IMR-90 (cell line): ENCODE measurements at regions of chr4 and their contacts with region 1.

Region 1: GRCh38 chr4:85798012-85798770 is 323.2 kb downstream of the ARHGAP24 start:
- DNase-seq: no peak
- ATAC-seq: no peak
- H3K4me3 ChIP-seq: no peak overlapping the region
- H3K27ac ChIP-seq: no peak overlapping the region
- H3K4me1 ChIP-seq: peaks cover 2% of the 10 kb centered on the region; the same call in 1 of the 2 replicates
- H3K27me3 ChIP-seq: no peaks in the 10 kb centered on the region
- CTCF ChIP-seq: no peak
- POLR2A ChIP-seq: no peak
- RAD21 ChIP-seq: no peak

Region 2: DNA sequence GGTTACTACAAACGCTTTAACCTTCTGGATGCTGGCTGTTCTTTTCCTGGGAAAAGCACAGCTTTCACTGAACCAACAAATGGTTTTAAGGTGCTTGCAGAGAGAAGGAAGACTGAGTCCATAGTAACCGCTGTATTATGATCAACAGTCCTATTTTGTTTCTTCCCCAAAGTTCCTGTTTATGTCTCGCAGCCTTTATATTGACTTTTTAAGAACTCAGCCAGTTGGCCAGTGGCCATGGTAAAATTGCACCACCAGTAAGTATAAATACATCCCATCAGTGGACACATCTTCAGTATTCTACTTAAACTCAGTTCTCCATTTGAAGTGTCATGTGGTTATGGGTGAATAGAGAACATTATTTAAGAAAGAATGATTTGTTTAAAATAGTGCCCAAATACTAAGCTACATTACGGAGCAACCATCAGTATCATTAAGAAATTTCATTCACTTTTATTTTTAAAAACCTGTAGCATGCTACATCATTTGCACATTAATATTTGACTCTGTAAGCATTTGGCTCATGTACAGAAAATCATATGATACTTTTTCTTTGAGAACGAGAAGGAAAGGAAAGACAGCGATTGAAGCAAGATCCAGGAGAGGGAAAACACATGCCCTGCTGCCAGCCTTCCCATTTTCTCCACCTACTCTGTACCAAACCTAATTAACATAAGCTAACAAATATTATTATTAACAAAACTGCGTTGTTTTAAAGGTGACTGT is 36.2 kb before region 1 on chr4:
- CTCF ChIA-PET with region 1: interaction called, 16 read pairs
- POLR2A ChIA-PET with region 1: no interaction called
- dilution Hi-C with region 1: no loop called
- in situ Hi-C with region 1: no loop called
- intact Hi-C with region 1: loop called (anchors 2 kb)
- DNase-seq: peak; percentile 82
- ATAC-seq: peak; percentile 57
- H3K4me3 ChIP-seq: no peak overlapping the region
- H3K27ac ChIP-seq: peak overlapping the region; percentile 80; the same call in 1 of the 2 replicates
- H3K4me1 ChIP-seq: peaks cover 13% of the 10 kb centered on the region
- H3K27me3 ChIP-seq: no peaks in the 10 kb centered on the region
- CTCF ChIP-seq: no peak
- POLR2A ChIP-seq: no peak
- RAD21 ChIP-seq: no peak

Region 3: DNA sequence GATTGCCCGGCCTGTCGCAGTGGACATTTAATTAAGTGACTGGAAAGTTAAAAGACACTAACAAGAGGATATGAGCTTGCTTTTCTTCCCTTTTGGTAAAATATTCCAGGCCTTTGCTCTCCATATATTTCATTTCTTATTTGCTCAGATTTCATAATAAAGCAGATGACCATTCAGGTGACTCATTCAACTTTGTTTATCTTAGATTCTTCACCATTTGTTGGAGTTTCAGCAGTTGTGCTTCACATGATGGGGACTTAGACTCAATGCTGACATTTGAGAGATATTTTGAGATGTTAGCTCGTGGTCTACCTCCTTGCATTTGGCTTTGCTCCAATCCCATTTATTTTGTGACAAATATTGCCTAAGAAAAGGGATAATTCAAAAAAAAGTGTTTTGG is 11.1 kb before region 1 on chr4:
- CTCF ChIA-PET with region 1: interaction called, 25 read pairs
- POLR2A ChIA-PET with region 1: no interaction called
- dilution Hi-C with region 1: no loop called
- in situ Hi-C with region 1: no loop called
- intact Hi-C with region 1: no loop called
- DNase-seq: peak; percentile 93
- ATAC-seq: peak; percentile 50
- H3K4me3 ChIP-seq: no peak overlapping the region
- H3K27ac ChIP-seq: peak overlapping the region; percentile 87
- H3K4me1 ChIP-seq: peaks cover 21% of the 10 kb centered on the region
- H3K27me3 ChIP-seq: no peaks in the 10 kb centered on the region
- CTCF ChIP-seq: no peak
- POLR2A ChIP-seq: no peak
- RAD21 ChIP-seq: no peak

Region 4: GRCh38 chr4:85889314-85889713 is 91.1 kb after region 1 on chr4:
- CTCF ChIA-PET with region 1: no interaction called
- POLR2A ChIA-PET with region 1: no interaction called
- dilution Hi-C with region 1: no loop called
- in situ Hi-C with region 1: no loop called
- intact Hi-C with region 1: no loop called
- DNase-seq: no peak
- ATAC-seq: no peak
- H3K4me3 ChIP-seq: no peak overlapping the region
- H3K27ac ChIP-seq: no peak overlapping the region
- H3K4me1 ChIP-seq: no peaks in the 10 kb centered on the region
- H3K27me3 ChIP-seq: no peaks in the 10 kb centered on the region
- CTCF ChIP-seq: no peak
- POLR2A ChIP-seq: no peak
- RAD21 ChIP-seq: no peak

Region 5: GRCh38 chr4:86043755-86044592 is 245.8 kb after region 1 on chr4:
- CTCF ChIA-PET with region 1: interaction called, 17 read pairs
- POLR2A ChIA-PET with region 1: no interaction called
- dilution Hi-C with region 1: no loop called
- in situ Hi-C with region 1: no loop called
- intact Hi-C with region 1: loop called (anchors 1 kb)
- DNase-seq: peak; percentile 55
- ATAC-seq: peak; percentile 74
- H3K4me3 ChIP-seq: no peak overlapping the region
- H3K27ac ChIP-seq: no peak overlapping the region
- H3K4me1 ChIP-seq: no peaks in the 10 kb centered on the region
- H3K27me3 ChIP-seq: no peaks in the 10 kb centered on the region
- CTCF ChIP-seq: peak; percentile 67
- POLR2A ChIP-seq: no peak
- RAD21 ChIP-seq: peak; percentile 79